ENCODE measurements at regions of chr2 and their contacts with region 1.

Region 1: DNA sequence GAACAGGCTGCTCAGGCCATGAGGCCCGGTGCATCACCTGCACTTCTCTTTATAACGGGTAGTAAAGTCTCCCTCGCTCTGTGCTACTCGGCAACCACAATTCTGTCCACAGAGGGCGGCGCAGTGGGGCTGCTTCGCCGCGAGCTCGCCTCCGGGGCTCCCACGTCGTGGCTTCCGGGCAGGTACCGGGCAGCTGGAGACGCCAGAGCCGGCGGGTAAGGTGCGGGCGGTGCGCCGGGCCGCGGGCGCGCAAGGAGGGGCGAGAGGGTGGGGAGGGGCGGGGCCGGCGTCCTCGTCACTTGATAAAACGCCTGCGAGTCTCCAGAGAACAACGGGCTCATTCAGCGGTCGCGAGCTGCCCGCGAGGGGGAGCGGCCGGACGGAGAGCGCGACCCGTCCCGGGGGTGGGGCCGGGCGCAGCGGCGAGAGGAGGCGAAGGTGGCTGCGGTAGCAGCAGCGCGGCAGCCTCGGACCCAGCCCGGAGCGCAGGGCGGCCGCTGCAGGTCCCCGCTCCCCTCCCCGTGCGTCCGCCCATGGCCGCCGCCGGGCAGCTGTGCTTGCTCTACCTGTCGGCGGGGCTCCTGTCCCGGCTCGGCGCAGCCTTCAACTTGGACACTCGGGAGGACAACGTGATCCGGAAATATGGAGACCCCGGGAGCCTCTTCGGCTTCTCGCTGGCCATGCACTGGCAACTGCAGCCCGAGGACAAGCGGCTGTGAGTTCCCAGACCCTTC is at the start of gene ITGA6:
- DNase-seq: peak; percentile 87 to 96
- H3K4me3 ChIP-seq: peak within 1 kb of the TSS; percentile 57
- H3K27ac ChIP-seq: peak within 1 kb of the TSS; percentile 52
- H3K4me1 ChIP-seq: peaks cover 45% of the 10 kb centered on the region
- H3K27me3 ChIP-seq: no peaks in the 10 kb centered on the region
- CTCF ChIP-seq: peak; percentile 43; the same call in 1 of the 2 replicates
- total RNA-seq, gene ITGA6: 180 and 213 TPM in 2 replicates

Region 2: DNA sequence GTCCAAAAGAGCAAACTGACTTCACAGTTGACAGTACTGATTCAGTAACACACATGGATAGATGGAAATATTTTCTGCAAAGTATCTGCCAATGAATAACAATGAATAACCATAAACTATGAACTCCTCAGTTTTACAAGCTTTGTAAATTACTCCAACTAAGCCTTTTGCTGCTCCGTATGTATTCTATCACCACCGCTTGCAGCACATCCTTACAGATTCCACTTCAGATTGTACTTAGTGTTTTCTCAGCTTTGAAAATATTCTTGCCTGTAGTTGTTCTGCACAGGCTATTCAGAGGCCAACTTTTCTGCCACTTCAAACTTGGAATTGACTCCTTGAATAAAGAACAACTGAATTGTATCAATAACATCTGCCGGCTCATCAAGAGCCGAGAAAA is 1302.9 kb before region 1 on chr2:
- CTCF ChIA-PET with region 1: no interaction called
- POLR2A ChIA-PET with region 1: no interaction called
- intact Hi-C with region 1: loop called (anchors 10 kb)
- DNase-seq: no peak
- H3K4me3 ChIP-seq: no peak overlapping the region
- H3K27ac ChIP-seq: peak overlapping the region; percentile 23; the same call in 1 of the 2 replicates
- H3K4me1 ChIP-seq: no peaks in the 10 kb centered on the region
- H3K27me3 ChIP-seq: no peaks in the 10 kb centered on the region
- CTCF ChIP-seq: no peak

Region 3: GRCh38 chr2:171762879-171763573 is 664.4 kb before region 1 on chr2:
- CTCF ChIA-PET with region 1: no interaction called
- POLR2A ChIA-PET with region 1: interaction called, 14 read pairs
- intact Hi-C with region 1: no loop called
- DNase-seq: no peak
- H3K4me3 ChIP-seq: no peak overlapping the region
- H3K27ac ChIP-seq: no peak overlapping the region
- H3K4me1 ChIP-seq: no peaks in the 10 kb centered on the region
- H3K27me3 ChIP-seq: no peaks in the 10 kb centered on the region
- CTCF ChIP-seq: no peak

Region 4: GRCh38 chr2:172234716-172235691 is 192.4 kb before region 1 on chr2:
- CTCF ChIA-PET with region 1: interaction called, 3 read pairs
- POLR2A ChIA-PET with region 1: interaction called, 11 read pairs
- intact Hi-C with region 1: loop called (anchors 2 kb)
- DNase-seq: no peak
- H3K4me3 ChIP-seq: no peak overlapping the region
- H3K27ac ChIP-seq: no peak overlapping the region
- H3K4me1 ChIP-seq: peaks cover 30% of the 10 kb centered on the region
- H3K27me3 ChIP-seq: no peaks in the 10 kb centered on the region
- CTCF ChIP-seq: no peak

Region 5: GRCh38 chr2:172394002-172394401 is 33.4 kb before region 1 on chr2:
- CTCF ChIA-PET with region 1: no interaction called
- POLR2A ChIA-PET with region 1: interaction called, 13 read pairs
- intact Hi-C with region 1: no loop called
- DNase-seq: no peak
- H3K4me3 ChIP-seq: no peak overlapping the region
- H3K27ac ChIP-seq: no peak overlapping the region
- H3K4me1 ChIP-seq: no peaks in the 10 kb centered on the region
- H3K27me3 ChIP-seq: no peaks in the 10 kb centered on the region
- CTCF ChIP-seq: no peak

Region 6: GRCh38 chr2:172442072-172442895 is 14.9 kb after region 1 on chr2:
- CTCF ChIA-PET with region 1: interaction called, 72 read pairs
- POLR2A ChIA-PET with region 1: interaction called, 17 read pairs
- intact Hi-C with region 1: loop called (anchors 1 kb)
- DNase-seq: peak; percentile 100
- H3K4me3 ChIP-seq: peak overlapping the region; percentile 5; the same call in 1 of the 2 replicates
- H3K27ac ChIP-seq: peak overlapping the region; percentile 81
- H3K4me1 ChIP-seq: peaks cover 80% of the 10 kb centered on the region
- H3K27me3 ChIP-seq: no peaks in the 10 kb centered on the region
- CTCF ChIP-seq: no peak

Region 7: DNA sequence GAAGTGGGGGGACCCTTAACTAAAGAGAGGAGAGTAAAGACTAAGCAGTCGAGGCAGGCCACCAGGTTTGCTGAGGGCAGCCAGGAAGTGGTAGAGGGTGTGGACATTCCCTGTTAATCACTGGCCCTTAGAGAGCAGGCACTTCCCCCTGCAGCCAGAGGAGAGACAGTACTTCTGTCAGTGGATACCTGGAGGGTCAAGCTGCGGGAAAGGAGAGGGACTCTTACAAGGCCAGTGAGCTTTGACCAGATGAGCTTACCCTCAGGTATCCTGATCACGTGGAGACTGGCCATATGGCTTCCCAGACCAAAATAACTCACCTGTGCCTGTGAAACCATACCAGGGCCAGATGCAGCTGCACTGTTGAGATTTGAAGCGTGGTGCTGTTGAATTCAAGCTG is 28.6 kb after region 1 on chr2:
- CTCF ChIA-PET with region 1: interaction called, 87 read pairs
- POLR2A ChIA-PET with region 1: interaction called, 9 read pairs
- intact Hi-C with region 1: loop called (anchors 1 kb)
- DNase-seq: peak; percentile 63 to 71
- H3K4me3 ChIP-seq: no peak overlapping the region
- H3K27ac ChIP-seq: peak overlapping the region; percentile 67
- H3K4me1 ChIP-seq: peaks cover 73% of the 10 kb centered on the region
- H3K27me3 ChIP-seq: no peaks in the 10 kb centered on the region
- CTCF ChIP-seq: no peak